ENCODE measurements at regions of chr2 and their contacts with region 1.

Region 1: DNA sequence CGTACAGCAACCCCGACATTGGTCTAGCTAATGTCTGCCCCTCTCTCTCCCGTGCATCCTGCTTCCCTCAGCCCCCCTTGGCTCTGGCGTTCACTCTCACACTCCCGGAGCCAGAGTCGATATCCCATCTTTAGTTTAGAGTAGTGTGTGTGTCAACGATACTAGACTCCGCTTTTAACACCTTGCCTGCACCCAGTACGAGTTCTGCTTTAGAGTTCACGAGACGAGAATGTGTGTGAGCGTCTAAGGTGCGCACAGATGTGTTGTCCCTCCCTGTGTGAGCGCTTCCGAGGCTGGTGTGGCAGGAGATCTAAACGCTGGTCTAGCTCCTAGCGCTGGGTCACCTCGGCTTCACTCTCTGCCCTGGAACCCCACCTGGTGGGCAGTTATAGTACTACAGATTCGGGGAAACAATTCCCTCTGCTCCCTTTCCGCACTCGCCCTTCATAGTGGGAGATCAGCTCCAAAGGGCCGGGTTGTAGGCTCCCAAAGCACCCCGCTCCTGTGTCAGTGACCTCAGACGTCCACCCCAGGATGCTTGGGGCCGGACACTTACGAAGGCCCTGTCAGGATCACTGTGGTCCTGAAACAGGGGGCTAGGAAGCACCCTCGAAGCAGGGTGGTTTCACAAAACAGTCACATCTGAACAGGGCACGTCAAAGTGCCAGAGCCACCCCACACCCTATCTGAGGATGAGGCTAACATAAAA is 2.6 kb upstream of the CYP26B1 start:
- DNase-seq: peak; percentile 67 to 81
- H3K4me3 ChIP-seq: peak overlapping the region in 2 of 3 donors; percentile 50 to 70
- H3K27ac ChIP-seq: no peak overlapping the region
- H3K4me1 ChIP-seq: peaks cover 25 to 36% of the 10 kb centered on the region in 2 donors
- H3K27me3 ChIP-seq: peaks cover 12 to 66% of the 10 kb centered on the region in 2 donors
- CTCF ChIP-seq: peak; percentile 91 to 97 (median 95)
- POLR2A ChIP-seq: no peak

Region 2: GRCh38 chr2:71544919-71545571 is 605.3 kb before region 1 on chr2:
- intact Hi-C with region 1: loop called (anchors 5 kb)
- DNase-seq: peak in 1 of 2 donors; percentile 15
- H3K4me3 ChIP-seq: peak overlapping the region in 1 of 3 donors; percentile 30
- H3K27ac ChIP-seq: peak overlapping the region in 1 of 2 donors; percentile 44
- H3K4me1 ChIP-seq: no peaks in the 10 kb centered on the region
- H3K27me3 ChIP-seq: peaks cover 0 to 13% of the 10 kb centered on the region in 2 donors
- CTCF ChIP-seq: no peak
- POLR2A ChIP-seq: no peak

Region 3: GRCh38 chr2:71923887-71924533 is 226.3 kb before region 1 on chr2:
- intact Hi-C with region 1: loop called (anchors 10 kb)
- DNase-seq: no peak
- H3K4me3 ChIP-seq: no peak overlapping the region
- H3K27ac ChIP-seq: no peak overlapping the region
- H3K4me1 ChIP-seq: no peaks in the 10 kb centered on the region
- H3K27me3 ChIP-seq: no peaks in the 10 kb centered on the region
- CTCF ChIP-seq: peak; percentile 10 to 80 (median 76)
- POLR2A ChIP-seq: no peak

Region 4: GRCh38 chr2:71995067-71995665 is 155.1 kb before region 1 on chr2:
- intact Hi-C with region 1: no loop called
- DNase-seq: no peak
- H3K4me3 ChIP-seq: no peak overlapping the region
- H3K27ac ChIP-seq: no peak overlapping the region
- H3K4me1 ChIP-seq: no peaks in the 10 kb centered on the region
- H3K27me3 ChIP-seq: no peaks in the 10 kb centered on the region
- CTCF ChIP-seq: peak in 2 of 3 donors; percentile 22 to 26
- POLR2A ChIP-seq: no peak

Region 5: GRCh38 chr2:72083751-72084583 is 66.3 kb before region 1 on chr2:
- intact Hi-C with region 1: no loop called
- DNase-seq: no peak
- H3K4me3 ChIP-seq: no peak overlapping the region
- H3K27ac ChIP-seq: no peak overlapping the region
- H3K4me1 ChIP-seq: no peaks in the 10 kb centered on the region
- H3K27me3 ChIP-seq: no peaks in the 10 kb centered on the region
- CTCF ChIP-seq: no peak
- POLR2A ChIP-seq: no peak

Region 6: GRCh38 chr2:72104821-72105588 is 45.3 kb before region 1 on chr2:
- intact Hi-C with region 1: no loop called
- DNase-seq: no peak
- H3K4me3 ChIP-seq: no peak overlapping the region
- H3K27ac ChIP-seq: no peak overlapping the region
- H3K4me1 ChIP-seq: no peaks in the 10 kb centered on the region
- H3K27me3 ChIP-seq: no peaks in the 10 kb centered on the region
- CTCF ChIP-seq: no peak
- POLR2A ChIP-seq: no peak

Measured in breast epithelium (tissue), 4 donors.